CD8-positive, alpha-beta T cell (primary cell): ENCODE measurements at regions of chr16 and their contacts with region 1.

Region 1: GRCh38 chr16:352547-353403 is at the start of gene AXIN1:
- DNase-seq: peak; percentile 97 to 100 (median 100)
- ATAC-seq: peak; percentile 87
- H3K4me3 ChIP-seq: peak within 1 kb of the TSS; percentile 53 to 58
- H3K4me3 Mint-ChIP-seq: peak within 1 kb of the TSS; percentile 91
- H3K27ac ChIP-seq: peak within 1 kb of the TSS; percentile 47 to 69
- H3K27ac Mint-ChIP-seq: peak within 1 kb of the TSS; percentile 89
- H3K4me1 ChIP-seq: peaks cover 61% of the 10 kb centered on the region
- H3K4me1 Mint-ChIP-seq: peaks cover 62% of the 10 kb centered on the region
- H3K27me3 ChIP-seq: no peaks in the 10 kb centered on the region
- H3K27me3 Mint-ChIP-seq: no peaks in the 10 kb centered on the region
- CTCF ChIP-seq: peak; percentile 17
- total RNA-seq, gene AXIN1: 25.4 to 28.6 TPM

Region 2: GRCh38 chr16:138049-138417 is 214.7 kb before region 1 on chr16:
- CTCF ChIA-PET with region 1: interaction called, 3 read pairs
- POLR2A ChIA-PET with region 1: no interaction called
- intact Hi-C with region 1: loop called in 1 of 2 experiments (anchors 1 kb)
- DNase-seq: peak in 6 of 9 experiments; percentile 8 to 61 (median 36)
- ATAC-seq: peak; percentile 25
- H3K4me3 ChIP-seq: peak overlapping the region; percentile 58 to 75
- H3K4me3 Mint-ChIP-seq: peak overlapping the region; percentile 85
- H3K27ac ChIP-seq: peak overlapping the region; percentile 33 to 40
- H3K27ac Mint-ChIP-seq: peak overlapping the region; percentile 66
- H3K4me1 ChIP-seq: peaks cover 7% of the 10 kb centered on the region
- H3K4me1 Mint-ChIP-seq: peaks cover 34% of the 10 kb centered on the region
- H3K27me3 ChIP-seq: no peaks in the 10 kb centered on the region
- H3K27me3 Mint-ChIP-seq: no peaks in the 10 kb centered on the region
- CTCF ChIP-seq: no peak

Region 3: GRCh38 chr16:234468-235305 is 118.1 kb before region 1 on chr16 and contains the start of gene FAM234A:
- CTCF ChIA-PET with region 1: interaction called, 9 read pairs
- POLR2A ChIA-PET with region 1: interaction called, 9 read pairs
- intact Hi-C with region 1: loop called (anchors 1 kb)
- DNase-seq: peak; percentile 90 to 97 (median 95)
- ATAC-seq: peak; percentile 82
- H3K4me3 ChIP-seq: peak within 1 kb of the TSS; percentile 79 to 94
- H3K4me3 Mint-ChIP-seq: peak within 1 kb of the TSS; percentile 96
- H3K27ac ChIP-seq: peak within 1 kb of the TSS; percentile 99
- H3K27ac Mint-ChIP-seq: peak within 1 kb of the TSS; percentile 99
- H3K4me1 ChIP-seq: peaks cover 17% of the 10 kb centered on the region
- H3K4me1 Mint-ChIP-seq: peaks cover 15% of the 10 kb centered on the region
- H3K27me3 ChIP-seq: no peaks in the 10 kb centered on the region
- H3K27me3 Mint-ChIP-seq: no peaks in the 10 kb centered on the region
- CTCF ChIP-seq: peak; percentile 52
- total RNA-seq, gene FAM234A: 22.4 to 24.7 TPM

Region 4: GRCh38 chr16:296806-297510 is 55.8 kb before region 1 on chr16:
- CTCF ChIA-PET with region 1: no interaction called
- POLR2A ChIA-PET with region 1: no interaction called
- intact Hi-C with region 1: no loop called
- DNase-seq: no peak
- ATAC-seq: no peak
- H3K4me3 ChIP-seq: no peak overlapping the region
- H3K4me3 Mint-ChIP-seq: no peak overlapping the region
- H3K27ac ChIP-seq: no peak overlapping the region
- H3K27ac Mint-ChIP-seq: no peak overlapping the region
- H3K4me1 ChIP-seq: no peaks in the 10 kb centered on the region
- H3K4me1 Mint-ChIP-seq: no peaks in the 10 kb centered on the region
- H3K27me3 ChIP-seq: no peaks in the 10 kb centered on the region
- H3K27me3 Mint-ChIP-seq: no peaks in the 10 kb centered on the region
- CTCF ChIP-seq: no peak

Region 5: GRCh38 chr16:309476-309875 is 43.3 kb before region 1 on chr16:
- CTCF ChIA-PET with region 1: no interaction called
- POLR2A ChIA-PET with region 1: no interaction called
- intact Hi-C with region 1: loop called (anchors 1 to 5 kb)
- DNase-seq: peak in 5 of 9 experiments; percentile 43 to 74 (median 51)
- ATAC-seq: peak; percentile 86
- H3K4me3 ChIP-seq: no peak overlapping the region
- H3K4me3 Mint-ChIP-seq: no peak overlapping the region
- H3K27ac ChIP-seq: no peak overlapping the region
- H3K27ac Mint-ChIP-seq: peak overlapping the region; percentile 70
- H3K4me1 ChIP-seq: peaks cover 9% of the 10 kb centered on the region
- H3K4me1 Mint-ChIP-seq: peaks cover 17% of the 10 kb centered on the region
- H3K27me3 ChIP-seq: no peaks in the 10 kb centered on the region
- H3K27me3 Mint-ChIP-seq: no peaks in the 10 kb centered on the region
- CTCF ChIP-seq: no peak

Region 6: DNA sequence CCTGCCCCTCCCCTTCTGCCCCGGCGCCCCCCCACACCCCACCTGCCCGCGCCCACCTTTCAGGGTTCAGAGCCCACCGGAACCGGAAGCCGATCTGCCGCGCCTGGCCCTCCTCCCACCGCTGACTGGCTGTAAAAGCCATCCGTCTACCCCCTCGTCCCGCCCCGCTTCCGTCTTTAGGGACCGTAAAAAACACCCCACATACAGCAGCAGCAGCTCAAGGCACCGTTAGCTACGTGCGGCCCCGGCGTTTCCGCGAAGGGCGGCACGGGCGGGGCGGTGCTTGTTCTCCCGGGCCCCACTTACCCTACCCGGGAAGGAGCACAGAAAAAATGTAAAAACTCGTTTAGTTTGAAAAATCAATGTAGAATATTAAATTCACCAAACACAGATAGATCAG is 17.7 kb after region 1 on chr16 and contains the start of gene MRPL28:
- CTCF ChIA-PET with region 1: no interaction called
- POLR2A ChIA-PET with region 1: interaction called, 7 read pairs
- intact Hi-C with region 1: loop called (anchors 1 to 2 kb)
- DNase-seq: peak; percentile 86 to 97 (median 93)
- ATAC-seq: peak; percentile 99
- H3K4me3 ChIP-seq: peak within 1 kb of the TSS; percentile 15 to 20
- H3K4me3 Mint-ChIP-seq: peak within 1 kb of the TSS; percentile 84
- H3K27ac ChIP-seq: peak within 1 kb of the TSS; percentile 0 to 77
- H3K27ac Mint-ChIP-seq: peak within 1 kb of the TSS; percentile 92
- H3K4me1 ChIP-seq: peaks cover 14% of the 10 kb centered on the region
- H3K4me1 Mint-ChIP-seq: peaks cover 17% of the 10 kb centered on the region
- H3K27me3 ChIP-seq: no peaks in the 10 kb centered on the region
- H3K27me3 Mint-ChIP-seq: no peaks in the 10 kb centered on the region
- CTCF ChIP-seq: no peak
- total RNA-seq, gene MRPL28: 16.7 to 17.4 TPM

Region 7: DNA sequence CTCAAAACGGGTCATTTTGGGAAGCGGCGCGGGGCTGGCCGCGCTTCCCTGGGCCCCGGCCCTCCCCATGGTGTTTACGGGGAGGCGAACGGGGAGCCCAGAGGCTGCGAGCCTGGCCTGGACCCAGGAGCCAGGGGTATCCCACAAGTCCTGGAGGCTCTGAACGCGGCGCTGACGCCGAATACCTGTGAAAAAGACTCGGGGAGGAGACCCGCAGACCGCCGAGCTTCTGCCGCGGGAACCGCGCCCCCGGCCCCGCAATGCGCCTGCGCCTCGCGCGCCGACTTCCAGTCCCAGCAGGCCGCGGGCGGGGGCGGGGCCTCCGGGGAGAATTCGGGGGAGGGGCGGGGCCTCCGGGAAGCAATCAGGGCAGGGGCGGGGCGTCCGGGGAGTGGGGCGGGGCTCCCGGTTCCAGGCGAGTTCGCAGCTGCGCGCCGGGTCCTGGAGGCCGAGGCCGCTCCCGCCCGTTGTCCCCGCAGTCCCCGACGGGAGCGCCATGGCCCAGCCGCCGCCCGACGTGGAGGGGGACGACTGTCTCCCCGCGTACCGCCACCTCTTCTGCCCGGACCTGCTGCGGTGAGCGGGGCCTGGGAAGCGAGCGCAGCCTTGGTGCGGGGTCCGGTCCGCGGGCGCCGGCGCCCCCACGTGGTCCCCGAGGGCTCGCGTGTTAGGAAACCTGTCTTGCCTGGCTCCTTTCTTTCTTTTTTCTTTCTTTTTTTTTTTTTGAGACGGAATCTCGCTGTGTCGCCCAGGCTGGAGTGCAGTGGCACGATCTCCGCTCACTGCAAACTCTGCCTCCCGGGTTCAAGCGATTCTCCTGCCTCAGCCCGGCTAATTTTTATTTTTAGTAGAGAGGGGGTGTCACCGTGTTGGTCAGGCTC is 48.9 kb after region 1 on chr16 and contains the start of gene DECR2:
- CTCF ChIA-PET with region 1: interaction called, 3 read pairs
- POLR2A ChIA-PET with region 1: interaction called, 5 read pairs
- intact Hi-C with region 1: loop called (anchors 1 kb)
- DNase-seq: peak; percentile 96 to 100 (median 98)
- ATAC-seq: peak; percentile 88
- H3K4me3 ChIP-seq: peak within 1 kb of the TSS; percentile 88 to 91
- H3K4me3 Mint-ChIP-seq: peak within 1 kb of the TSS; percentile 90
- H3K27ac ChIP-seq: peak within 1 kb of the TSS; percentile 75 to 82
- H3K27ac Mint-ChIP-seq: peak within 1 kb of the TSS; percentile 98
- H3K4me1 ChIP-seq: peaks cover 11% of the 10 kb centered on the region
- H3K4me1 Mint-ChIP-seq: peaks cover 13% of the 10 kb centered on the region
- H3K27me3 ChIP-seq: no peaks in the 10 kb centered on the region
- H3K27me3 Mint-ChIP-seq: no peaks in the 10 kb centered on the region
- CTCF ChIP-seq: peak; percentile 55
- total RNA-seq, gene DECR2: 6.1 to 7.9 TPM